ENCODE measurements at regions of chrX and their contacts with region 1.

Region 1: GRCh38 chrX:39578354-39578869 is 519.3 kb downstream of the BCOR start:
- DNase-seq: peak; percentile 35
- CTCF ChIP-seq: no peak

Region 2: DNA sequence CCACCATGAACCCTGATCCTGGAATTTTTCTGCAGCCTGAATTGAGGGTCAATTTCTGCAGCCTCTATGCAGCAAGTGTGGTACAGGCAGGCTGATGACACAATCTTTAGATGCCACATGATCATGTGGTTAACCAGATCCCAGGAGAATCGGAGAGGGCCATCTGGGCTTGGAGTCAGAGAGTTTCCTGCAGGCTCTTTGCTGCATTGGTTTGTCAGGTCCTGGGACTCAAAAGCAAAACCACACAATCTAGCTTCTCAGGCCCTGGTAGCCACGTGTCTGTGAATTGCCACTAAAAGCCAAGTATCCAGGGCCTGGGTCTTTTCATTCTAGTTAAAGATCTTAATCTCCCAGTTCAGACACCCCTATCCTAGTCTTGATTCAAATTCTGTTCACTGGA is 54.9 kb after region 1 on chrX:
- in situ Hi-C with region 1: loop called (anchors 10 kb)
- DNase-seq: no peak
- CTCF ChIP-seq: no peak